CD8-positive, alpha-beta T cell (primary cell): ENCODE measurements at regions of chr6 and their contacts with region 1.

Region 1: GRCh38 chr6:2841264-2842138 is at the start of gene SERPINB1:
- DNase-seq: peak; percentile 47 to 88 (median 71)
- ATAC-seq: peak; percentile 77
- H3K4me3 ChIP-seq: peak within 1 kb of the TSS; percentile 56 to 76
- H3K4me3 Mint-ChIP-seq: peak within 1 kb of the TSS; percentile 88
- H3K27ac ChIP-seq: peak within 1 kb of the TSS; percentile 58 to 68
- H3K27ac Mint-ChIP-seq: peak within 1 kb of the TSS; percentile 92
- H3K4me1 ChIP-seq: peaks cover 30% of the 10 kb centered on the region
- H3K4me1 Mint-ChIP-seq: peaks cover 56% of the 10 kb centered on the region
- H3K27me3 ChIP-seq: no peaks in the 10 kb centered on the region
- H3K27me3 Mint-ChIP-seq: no peaks in the 10 kb centered on the region
- CTCF ChIP-seq: no peak
- total RNA-seq, gene SERPINB1: 48.8 to 50.7 TPM

Region 2: DNA sequence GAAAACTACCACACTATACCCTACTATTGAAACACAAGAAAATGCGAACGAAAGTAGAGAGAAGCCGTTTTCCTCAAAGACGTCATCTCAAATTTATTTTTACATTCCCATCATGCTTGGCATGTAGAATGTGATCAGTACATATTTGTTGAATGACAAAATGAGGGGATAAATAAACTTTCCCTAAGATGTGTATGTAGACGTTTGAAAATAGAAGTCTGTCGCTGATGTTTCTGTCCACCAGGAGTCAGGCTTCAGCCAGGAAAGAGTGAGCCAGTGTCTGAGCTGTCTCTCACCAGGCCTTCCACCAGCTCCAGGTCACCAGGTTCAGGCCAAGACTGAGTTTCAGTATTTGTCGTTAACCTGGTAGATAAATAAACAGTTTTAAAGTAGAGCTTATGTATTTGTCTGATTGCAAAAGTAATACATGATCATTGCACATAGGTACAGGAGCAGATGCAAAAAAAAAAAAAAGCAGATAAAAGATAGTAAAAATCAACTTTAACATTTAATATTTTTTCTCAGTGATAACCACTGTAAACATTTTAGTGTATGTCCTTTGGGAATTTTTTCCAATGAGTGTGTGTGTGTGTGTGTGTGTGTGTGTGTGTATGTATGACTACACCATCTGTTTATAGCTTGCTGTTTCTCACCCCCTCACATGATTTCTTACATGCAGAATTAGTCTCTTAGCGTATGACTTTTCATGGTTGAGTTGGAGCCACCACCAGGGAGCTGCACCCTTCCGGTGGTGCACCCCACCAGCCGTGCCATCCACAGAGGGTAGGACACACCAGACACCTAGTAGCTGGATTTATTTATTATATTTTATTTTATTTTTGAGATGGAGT is 50.2 kb before region 1 on chr6:
- CTCF ChIA-PET with region 1: interaction called, 23 read pairs
- POLR2A ChIA-PET with region 1: interaction called, 3 read pairs
- intact Hi-C with region 1: loop called (anchors 1 to 2 kb)
- DNase-seq: peak in 8 of 9 experiments; percentile 21 to 75 (median 47)
- ATAC-seq: peak; percentile 79
- H3K4me3 ChIP-seq: no peak overlapping the region
- H3K4me3 Mint-ChIP-seq: peak overlapping the region; percentile 13
- H3K27ac ChIP-seq: peak overlapping the region in 1 of 2 experiments; percentile 10
- H3K27ac Mint-ChIP-seq: peak overlapping the region; percentile 77
- H3K4me1 ChIP-seq: peaks cover 33% of the 10 kb centered on the region
- H3K4me1 Mint-ChIP-seq: peaks cover 32% of the 10 kb centered on the region
- H3K27me3 ChIP-seq: no peaks in the 10 kb centered on the region
- H3K27me3 Mint-ChIP-seq: no peaks in the 10 kb centered on the region
- CTCF ChIP-seq: peak; percentile 73

Region 3: DNA sequence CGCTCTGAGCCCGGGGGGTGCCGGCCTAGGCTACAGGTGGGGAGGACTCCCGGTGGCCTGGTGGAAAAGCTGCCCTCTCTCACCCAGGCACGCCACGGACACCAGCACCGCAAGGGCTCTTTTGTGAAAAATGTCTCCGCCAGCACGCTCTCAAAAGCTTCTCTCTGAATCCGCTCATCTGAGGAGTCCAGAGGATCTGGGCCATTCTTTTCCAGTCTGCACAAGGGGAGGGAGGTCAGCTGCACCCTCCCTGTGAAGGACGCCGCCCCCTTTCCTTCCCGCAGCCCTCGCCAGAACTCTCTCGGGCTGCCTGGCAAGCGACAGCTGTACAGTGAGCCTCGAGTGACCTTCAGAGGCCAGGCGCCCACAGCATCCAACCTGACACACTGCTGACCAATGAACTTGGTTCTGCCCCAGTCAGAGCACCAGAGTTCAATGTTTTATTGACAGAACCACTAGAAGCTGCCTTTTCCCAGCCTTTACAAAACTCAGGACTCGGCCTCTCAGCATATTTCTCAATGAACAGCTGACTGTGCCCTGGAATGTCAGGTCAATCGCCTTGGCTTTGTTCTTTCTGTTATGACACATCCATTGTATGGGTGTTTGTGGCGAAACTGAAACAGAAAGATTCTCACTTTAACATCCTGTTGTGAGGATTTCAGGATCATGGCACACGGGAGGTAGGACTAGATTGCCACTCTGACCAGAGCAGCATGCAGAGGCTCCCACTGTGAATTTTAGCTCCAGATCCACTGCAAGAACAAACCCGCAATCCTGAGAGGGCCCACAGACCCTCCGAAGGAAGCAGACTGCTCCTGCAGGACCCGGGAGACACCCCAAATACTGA is 34.9 kb after region 1 on chr6:
- CTCF ChIA-PET with region 1: interaction called, 8 read pairs
- POLR2A ChIA-PET with region 1: interaction called, 16 read pairs
- intact Hi-C with region 1: no loop called
- DNase-seq: peak in 3 of 9 experiments; percentile 38 to 67 (median 57)
- ATAC-seq: peak; percentile 9
- H3K4me3 ChIP-seq: peak overlapping the region; percentile 33 to 65
- H3K4me3 Mint-ChIP-seq: peak overlapping the region; percentile 87
- H3K27ac ChIP-seq: peak overlapping the region; percentile 24 to 77
- H3K27ac Mint-ChIP-seq: peak overlapping the region; percentile 93
- H3K4me1 ChIP-seq: peaks cover 68% of the 10 kb centered on the region
- H3K4me1 Mint-ChIP-seq: peaks cover 78% of the 10 kb centered on the region
- H3K27me3 ChIP-seq: no peaks in the 10 kb centered on the region
- H3K27me3 Mint-ChIP-seq: no peaks in the 10 kb centered on the region
- CTCF ChIP-seq: no peak

Region 4: GRCh38 chr6:2911171-2911570 is 69.7 kb after region 1 on chr6:
- CTCF ChIA-PET with region 1: interaction called, 202 read pairs
- POLR2A ChIA-PET with region 1: interaction called, 24 read pairs
- intact Hi-C with region 1: loop called (anchors 1 kb)
- DNase-seq: no peak
- ATAC-seq: no peak
- H3K4me3 ChIP-seq: no peak overlapping the region
- H3K4me3 Mint-ChIP-seq: no peak overlapping the region
- H3K27ac ChIP-seq: no peak overlapping the region
- H3K27ac Mint-ChIP-seq: no peak overlapping the region
- H3K4me1 ChIP-seq: no peaks in the 10 kb centered on the region
- H3K4me1 Mint-ChIP-seq: peaks cover 33% of the 10 kb centered on the region
- H3K27me3 ChIP-seq: no peaks in the 10 kb centered on the region
- H3K27me3 Mint-ChIP-seq: no peaks in the 10 kb centered on the region
- CTCF ChIP-seq: no peak

Region 5: GRCh38 chr6:2940010-2940850 is 98.7 kb after region 1 on chr6:
- CTCF ChIA-PET with region 1: interaction called, 306 read pairs
- POLR2A ChIA-PET with region 1: interaction called, 21 read pairs
- intact Hi-C with region 1: no loop called
- DNase-seq: peak; percentile 52 to 91 (median 73)
- ATAC-seq: peak; percentile 70
- H3K4me3 ChIP-seq: peak overlapping the region; percentile 52 to 75
- H3K4me3 Mint-ChIP-seq: peak overlapping the region; percentile 84
- H3K27ac ChIP-seq: peak overlapping the region; percentile 73 to 84
- H3K27ac Mint-ChIP-seq: peak overlapping the region; percentile 94
- H3K4me1 ChIP-seq: peaks cover 87% of the 10 kb centered on the region
- H3K4me1 Mint-ChIP-seq: peaks cover 80% of the 10 kb centered on the region
- H3K27me3 ChIP-seq: no peaks in the 10 kb centered on the region
- H3K27me3 Mint-ChIP-seq: no peaks in the 10 kb centered on the region
- CTCF ChIP-seq: no peak

Region 6: DNA sequence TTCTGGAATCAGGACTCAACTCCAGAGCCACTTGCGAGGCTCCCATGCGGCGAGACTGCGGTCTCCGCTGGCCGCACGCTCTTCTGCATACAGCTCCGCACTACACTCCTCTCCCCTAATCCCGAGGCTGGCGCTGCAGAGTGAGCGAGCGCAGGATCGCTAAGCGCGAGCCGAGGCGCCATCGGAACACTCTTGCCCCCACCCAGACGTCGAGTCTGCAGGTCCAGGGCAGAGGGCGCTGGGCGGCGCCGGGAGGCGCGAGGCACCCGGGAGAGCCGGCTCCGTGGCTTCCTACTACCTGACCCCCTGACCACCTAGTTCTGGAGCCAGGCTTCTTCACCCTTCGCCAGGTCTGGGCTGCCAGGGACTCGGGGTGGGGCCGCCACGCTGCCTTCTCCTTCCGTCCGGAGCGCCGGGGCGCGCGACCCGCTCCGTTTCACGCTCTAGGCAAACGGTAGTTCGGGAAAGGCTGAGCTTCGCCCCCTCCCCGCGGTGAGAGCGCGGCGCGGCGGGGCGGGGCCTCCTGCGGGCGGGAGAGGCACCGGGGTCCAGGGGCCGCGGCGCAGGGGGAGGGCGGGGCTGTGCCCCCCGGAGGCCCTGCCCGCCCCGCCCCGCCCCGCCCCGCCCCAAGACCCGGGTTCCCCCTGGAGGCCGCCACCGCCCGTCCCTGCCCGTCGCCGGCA is 321.2 kb after region 1 on chr6:
- CTCF ChIA-PET with region 1: no interaction called
- POLR2A ChIA-PET with region 1: no interaction called
- intact Hi-C with region 1: loop called in 1 of 2 experiments (anchors 10 kb)
- DNase-seq: peak; percentile 12 to 84 (median 63)
- ATAC-seq: peak; percentile 47
- H3K4me3 ChIP-seq: peak overlapping the region; percentile 71 to 79
- H3K4me3 Mint-ChIP-seq: peak overlapping the region; percentile 84
- H3K27ac ChIP-seq: peak overlapping the region in 1 of 2 experiments; percentile 72
- H3K27ac Mint-ChIP-seq: peak overlapping the region; percentile 86
- H3K4me1 ChIP-seq: peaks cover 33% of the 10 kb centered on the region
- H3K4me1 Mint-ChIP-seq: peaks cover 37% of the 10 kb centered on the region
- H3K27me3 ChIP-seq: no peaks in the 10 kb centered on the region
- H3K27me3 Mint-ChIP-seq: no peaks in the 10 kb centered on the region
- CTCF ChIP-seq: no peak

Region 7: GRCh38 chr6:3176562-3177355 is 335.3 kb after region 1 on chr6:
- CTCF ChIA-PET with region 1: no interaction called
- POLR2A ChIA-PET with region 1: no interaction called
- intact Hi-C with region 1: no loop called
- DNase-seq: peak in 5 of 9 experiments; percentile 11 to 41 (median 35)
- ATAC-seq: peak; percentile 54
- H3K4me3 ChIP-seq: no peak overlapping the region
- H3K4me3 Mint-ChIP-seq: no peak overlapping the region
- H3K27ac ChIP-seq: no peak overlapping the region
- H3K27ac Mint-ChIP-seq: no peak overlapping the region
- H3K4me1 ChIP-seq: no peaks in the 10 kb centered on the region
- H3K4me1 Mint-ChIP-seq: no peaks in the 10 kb centered on the region
- H3K27me3 ChIP-seq: no peaks in the 10 kb centered on the region
- H3K27me3 Mint-ChIP-seq: peaks cover 9% of the 10 kb centered on the region
- CTCF ChIP-seq: no peak